ENCODE measurements at regions of chr2 and their contacts with region 1.

Region 1: GRCh38 chr2:27890146-27890923 is at the starts of genes BABAM2 and RBKS:
- DNase-seq: peak; percentile 88
- H3K4me3 Mint-ChIP-seq: peak within 1 kb of the TSS; percentile 94
- H3K27ac Mint-ChIP-seq: peak within 1 kb of the TSS; percentile 98
- H3K4me1 Mint-ChIP-seq: peaks cover 53% of the 10 kb centered on the region
- H3K27me3 Mint-ChIP-seq: no peaks in the 10 kb centered on the region
- total RNA-seq, gene BABAM2: 49.0 and 54.5 TPM in 2 replicates
- total RNA-seq, gene RBKS: 1.8 and 3.0 TPM in 2 replicates

Region 2: DNA sequence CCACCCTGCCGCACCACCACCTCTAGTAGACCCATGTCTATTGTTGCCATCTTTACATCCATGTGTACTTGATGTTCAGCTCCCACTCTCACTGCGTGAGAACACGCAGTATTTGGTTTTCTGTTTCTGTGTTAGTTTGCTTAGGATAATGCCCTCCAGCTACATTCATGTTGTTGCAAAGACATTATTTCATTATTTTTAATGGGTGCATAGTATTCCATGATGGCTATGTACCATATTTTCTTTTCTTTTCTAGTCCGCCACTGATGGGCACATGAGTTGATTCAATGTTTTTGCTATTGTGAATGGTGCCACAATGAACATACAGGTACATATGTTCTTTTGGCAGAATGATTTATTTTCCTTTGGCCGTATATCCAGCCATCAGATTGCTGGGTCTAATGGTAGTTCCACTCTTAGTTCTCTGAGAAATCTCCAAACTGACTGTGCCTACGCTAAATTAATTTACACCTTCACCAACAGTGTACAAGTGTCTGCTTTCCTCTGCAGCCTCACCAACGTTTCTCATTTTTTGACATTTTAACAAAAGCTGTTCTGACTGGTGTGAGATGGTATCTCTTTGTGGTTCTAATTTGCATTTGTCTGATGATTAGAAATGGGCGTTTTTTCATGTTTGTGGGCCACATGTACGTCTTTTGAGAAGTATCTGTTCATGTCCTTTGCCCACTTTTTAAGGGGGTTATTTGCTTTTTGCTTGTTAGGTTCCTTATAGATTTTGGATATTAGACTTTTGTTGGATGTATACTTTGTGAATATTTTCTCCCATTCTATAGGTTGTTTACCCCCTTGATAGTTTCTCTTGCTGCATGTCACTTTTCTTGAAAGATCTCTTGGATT is 499.3 kb before region 1 on chr2:
- intact Hi-C with region 1: no loop called
- DNase-seq: no peak
- H3K4me3 Mint-ChIP-seq: peak overlapping the region; percentile 23
- H3K27ac Mint-ChIP-seq: peak overlapping the region; percentile 77
- H3K4me1 Mint-ChIP-seq: peaks cover 23% of the 10 kb centered on the region
- H3K27me3 Mint-ChIP-seq: no peaks in the 10 kb centered on the region

Region 3: DNA sequence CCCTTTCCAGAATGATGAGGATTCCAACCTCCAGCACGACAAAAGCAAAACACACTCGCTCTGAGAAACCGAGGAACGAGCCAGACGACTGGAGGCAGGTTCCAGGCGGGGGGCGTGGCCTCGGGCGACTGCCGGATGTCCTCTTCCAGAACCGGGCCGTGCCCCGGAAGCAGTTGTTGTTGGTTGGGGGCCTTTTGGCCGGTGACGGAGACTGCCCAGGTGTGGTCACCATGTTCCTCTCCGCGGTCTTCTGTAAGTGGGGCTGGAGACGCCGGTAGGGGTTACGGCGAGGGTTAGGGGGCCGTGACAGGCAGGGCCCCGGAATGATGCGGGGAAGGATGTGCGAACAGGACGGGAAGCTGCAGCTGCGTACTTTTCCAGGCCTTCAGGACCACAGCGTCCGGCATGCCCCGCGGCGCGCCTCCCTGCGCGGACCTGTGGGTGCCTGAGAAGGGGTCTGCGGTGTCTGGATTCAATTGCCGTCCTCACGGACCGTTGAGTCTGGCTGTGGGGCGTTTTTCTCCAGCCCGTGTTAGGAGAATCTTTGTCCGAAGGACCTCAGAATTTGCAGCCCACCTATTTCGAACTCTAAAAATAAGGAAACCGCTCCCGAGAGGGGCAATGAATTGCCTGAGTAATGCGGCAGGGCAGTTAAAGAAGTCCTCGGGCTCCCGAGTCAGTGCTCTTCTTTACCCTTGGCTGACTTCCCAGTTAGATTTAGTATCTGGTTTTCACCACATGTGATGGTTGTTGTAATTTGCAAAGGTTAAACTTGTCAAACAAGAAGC is 118.6 kb before region 1 on chr2 and contains the start of gene MRPL33:
- intact Hi-C with region 1: loop called (anchors 1 kb)
- DNase-seq: peak; percentile 85
- H3K4me3 Mint-ChIP-seq: peak within 1 kb of the TSS; percentile 95
- H3K27ac Mint-ChIP-seq: peak within 1 kb of the TSS; percentile 92
- H3K4me1 Mint-ChIP-seq: peaks cover 28% of the 10 kb centered on the region
- H3K27me3 Mint-ChIP-seq: no peaks in the 10 kb centered on the region
- total RNA-seq, gene MRPL33: 57.7 and 58.9 TPM in 2 replicates

Region 4: GRCh38 chr2:27903649-27904404 is 13.5 kb after region 1 on chr2:
- intact Hi-C with region 1: loop called (anchors 1 kb)
- DNase-seq: no peak
- H3K4me3 Mint-ChIP-seq: no peak overlapping the region
- H3K27ac Mint-ChIP-seq: peak overlapping the region; percentile 1
- H3K4me1 Mint-ChIP-seq: peaks cover 63% of the 10 kb centered on the region
- H3K27me3 Mint-ChIP-seq: no peaks in the 10 kb centered on the region

Region 5: DNA sequence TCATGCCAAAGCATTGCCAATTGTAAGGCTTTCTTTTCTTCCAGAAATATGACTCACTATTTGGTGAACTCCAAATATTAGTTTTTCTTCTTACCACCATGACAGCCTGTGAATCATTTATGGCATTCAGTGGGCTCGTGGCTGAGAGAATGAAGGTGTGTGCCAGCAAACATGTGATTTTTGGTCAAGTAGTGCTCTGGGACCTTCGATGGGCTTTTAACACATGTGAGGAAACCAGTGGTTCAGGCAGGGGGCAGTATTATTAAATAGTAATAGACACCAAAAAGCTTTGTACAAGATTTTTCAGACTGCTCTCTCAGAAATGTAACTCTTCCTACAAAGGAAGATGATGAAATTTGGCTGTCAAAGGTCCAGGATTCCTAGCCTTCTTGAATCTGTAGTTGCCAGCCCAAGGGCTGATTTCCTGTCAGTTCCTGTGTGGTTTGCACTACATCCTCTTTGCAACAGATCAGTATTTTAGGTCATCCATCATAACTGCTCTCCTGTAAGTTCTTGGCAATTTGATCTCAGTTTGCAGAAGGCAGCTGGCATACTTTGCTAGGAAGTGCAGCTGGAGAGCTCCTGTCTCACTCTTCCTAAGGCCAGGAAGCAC is 64.5 kb after region 1 on chr2:
- intact Hi-C with region 1: loop called (anchors 2 kb)
- DNase-seq: no peak
- H3K4me3 Mint-ChIP-seq: peak overlapping the region; percentile 53
- H3K27ac Mint-ChIP-seq: peak overlapping the region; percentile 72
- H3K4me1 Mint-ChIP-seq: peaks cover 81% of the 10 kb centered on the region
- H3K27me3 Mint-ChIP-seq: no peaks in the 10 kb centered on the region

Region 6: GRCh38 chr2:27973592-27973991 is 83.3 kb after region 1 on chr2:
- intact Hi-C with region 1: no loop called
- DNase-seq: no peak
- H3K4me3 Mint-ChIP-seq: no peak overlapping the region
- H3K27ac Mint-ChIP-seq: no peak overlapping the region
- H3K4me1 Mint-ChIP-seq: peaks cover 39% of the 10 kb centered on the region
- H3K27me3 Mint-ChIP-seq: no peaks in the 10 kb centered on the region

Region 7: GRCh38 chr2:28276076-28276618 is 385.8 kb after region 1 on chr2:
- intact Hi-C with region 1: loop called (anchors 5 kb)
- DNase-seq: no peak
- H3K4me3 Mint-ChIP-seq: no peak overlapping the region
- H3K27ac Mint-ChIP-seq: peak overlapping the region; percentile 41
- H3K4me1 Mint-ChIP-seq: peaks cover 48% of the 10 kb centered on the region
- H3K27me3 Mint-ChIP-seq: no peaks in the 10 kb centered on the region

Region 8: GRCh38 chr2:28406276-28407096 is 516.2 kb after region 1 on chr2:
- intact Hi-C with region 1: loop called (anchors 5 kb)
- DNase-seq: peak; percentile 36
- H3K4me3 Mint-ChIP-seq: peak overlapping the region; percentile 21
- H3K27ac Mint-ChIP-seq: peak overlapping the region; percentile 72
- H3K4me1 Mint-ChIP-seq: peaks cover 70% of the 10 kb centered on the region
- H3K27me3 Mint-ChIP-seq: no peaks in the 10 kb centered on the region

Region 9: GRCh38 chr2:28452534-28453081 is 562.3 kb after region 1 on chr2:
- intact Hi-C with region 1: loop called (anchors 5 kb)
- DNase-seq: peak; percentile 65
- H3K4me3 Mint-ChIP-seq: no peak overlapping the region
- H3K27ac Mint-ChIP-seq: peak overlapping the region; percentile 30
- H3K4me1 Mint-ChIP-seq: peaks cover 48% of the 10 kb centered on the region
- H3K27me3 Mint-ChIP-seq: no peaks in the 10 kb centered on the region